ENCODE measurements at regions of chr11 and their contacts with region 1.

Region 1: DNA sequence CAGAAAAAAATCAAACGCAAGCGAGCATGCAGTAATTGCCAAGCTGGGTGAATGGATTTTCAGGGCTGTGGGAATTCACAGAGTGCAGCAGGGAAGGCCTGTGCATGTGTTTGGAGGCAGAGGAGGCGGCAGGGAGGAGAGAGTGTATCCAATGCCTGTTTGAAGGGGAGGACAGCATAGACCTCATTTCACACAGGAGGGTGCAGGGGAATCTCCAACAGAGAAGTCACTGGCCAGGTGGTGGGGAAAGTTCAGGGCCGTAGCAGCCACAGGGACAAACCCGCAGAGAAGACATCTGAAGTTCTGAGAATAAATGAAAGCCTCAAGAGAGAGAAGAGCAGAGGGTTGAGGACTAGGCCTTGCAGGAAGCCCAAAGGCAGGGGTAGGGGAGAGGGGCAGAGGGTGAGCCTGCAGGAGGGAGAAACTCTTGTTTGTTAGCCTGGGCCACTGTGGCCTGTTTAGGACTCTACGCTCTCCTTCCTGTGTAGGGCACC is 19.2 kb upstream of the KDM2A start:
- DNase-seq: no peak
- H3K4me3 ChIP-seq: no peak overlapping the region
- H3K27ac ChIP-seq: no peak overlapping the region
- H3K4me1 ChIP-seq: peaks cover 0 to 3% (median 1%) of the 10 kb centered on the region in 4 experiments; a peak in 2 of 7 replicates
- H3K27me3 ChIP-seq: no peaks in the 10 kb centered on the region
- CTCF ChIP-seq: no peak
- EP300 ChIP-seq: no peak
- POLR2A ChIP-seq: no peak
- RAD21 ChIP-seq: no peak

Region 2: DNA sequence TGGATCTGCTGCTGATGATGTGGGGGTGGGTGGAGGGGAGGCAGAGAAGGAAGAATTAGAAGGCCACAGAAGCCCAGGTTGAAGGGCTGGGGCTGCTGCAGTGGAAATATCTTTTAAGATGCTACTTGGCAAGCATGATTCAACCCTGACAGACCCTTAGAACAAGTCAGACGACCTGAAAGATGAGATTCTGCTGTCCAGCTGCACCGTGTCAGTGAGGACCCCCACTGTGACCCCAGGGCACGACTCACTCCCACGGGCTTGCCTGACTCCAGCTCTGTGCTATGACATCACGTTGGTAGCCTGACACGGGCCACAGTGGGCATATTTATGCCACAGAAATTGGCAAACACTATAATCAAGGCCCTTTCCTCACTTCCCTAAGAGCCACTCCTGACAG is 207.0 kb before region 1 on chr11:
- CTCF ChIA-PET with region 1: no interaction called
- POLR2A ChIA-PET with region 1: no interaction called
- DNase-seq: no peak
- H3K4me3 ChIP-seq: no peak overlapping the region
- H3K27ac ChIP-seq: no peak overlapping the region
- H3K4me1 ChIP-seq: peaks cover 0 to 9% (median 4%) of the 10 kb centered on the region in 4 experiments; a peak in 5 of 7 replicates
- H3K27me3 ChIP-seq: no peaks in the 10 kb centered on the region
- CTCF ChIP-seq: no peak
- EP300 ChIP-seq: no peak
- POLR2A ChIP-seq: no peak
- RAD21 ChIP-seq: no peak

Region 3: DNA sequence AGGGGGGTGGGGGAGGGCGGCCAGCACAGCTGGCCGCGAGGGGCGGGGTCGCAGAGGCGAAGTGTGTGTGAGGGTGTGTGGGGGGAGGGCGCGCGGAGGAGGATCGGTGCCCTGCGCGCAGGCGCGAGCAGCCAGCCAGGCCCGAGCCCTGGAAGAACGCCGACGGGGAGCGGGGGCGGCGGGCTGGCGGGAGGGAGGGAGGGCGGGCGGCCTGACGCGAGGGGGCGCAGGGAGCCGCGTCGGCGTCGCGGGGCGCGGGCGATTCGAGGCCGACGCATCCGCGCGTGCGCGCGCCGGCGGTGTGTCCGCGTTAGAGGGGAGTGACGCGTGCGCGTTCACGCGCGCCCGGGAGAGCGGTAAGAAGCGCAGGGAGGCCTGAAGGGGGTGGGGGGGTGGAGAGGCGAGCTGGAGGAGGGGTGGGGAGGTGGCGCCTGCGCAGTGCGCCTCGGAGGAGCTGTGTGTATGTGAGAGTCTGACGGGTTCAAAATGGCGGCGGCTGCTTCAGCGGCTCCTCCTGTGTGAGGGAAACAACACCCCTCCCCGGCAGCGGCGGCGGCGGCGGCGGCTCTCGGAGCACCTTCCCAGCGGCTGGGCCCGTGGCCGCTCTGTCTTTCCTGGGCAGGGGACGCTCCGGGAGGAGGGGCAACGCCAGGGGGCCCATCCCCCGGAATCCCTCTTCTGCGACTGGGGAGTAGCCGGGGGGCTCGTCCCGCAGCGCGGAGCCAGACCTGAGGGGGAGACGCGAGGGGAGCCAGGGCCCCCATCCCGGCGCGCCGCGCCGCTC is 19.1 kb after region 1 on chr11 and contains the start of gene KDM2A:
- CTCF ChIA-PET with region 1: interaction called, 17 read pairs
- POLR2A ChIA-PET with region 1: interaction called, 5 read pairs
- DNase-seq: peak; percentile 92 to 97
- H3K4me3 ChIP-seq: peak within 1 kb of the TSS; percentile 80 to 97 (median 92)
- H3K27ac ChIP-seq: peak within 1 kb of the TSS; percentile 94
- H3K4me1 ChIP-seq: peaks cover 0 to 5% (median 3%) of the 10 kb centered on the region in 4 experiments; a peak in 4 of 7 replicates
- H3K27me3 ChIP-seq: no peaks in the 10 kb centered on the region
- CTCF ChIP-seq: peak in 1 of 3 experiments; percentile 22; a peak in 1 of 4 replicates
- EP300 ChIP-seq: 0 out of 3 replicates have a peak, but pooled peaks of 1 of the 2 experiments have one; percentile 43
- POLR2A ChIP-seq: peak; percentile 30 to 52; a peak in 2 of 3 replicates
- RAD21 ChIP-seq: no peak; a peak in 1 of 4 replicates
- total RNA-seq, gene KDM2A: 56.6 and 66.2 TPM in 2 replicates

Region 4: GRCh38 chr11:67167086-67167485 is 67.2 kb after region 1 on chr11:
- CTCF ChIA-PET with region 1: interaction called, 12 read pairs
- POLR2A ChIA-PET with region 1: no interaction called
- DNase-seq: no peak
- H3K4me3 ChIP-seq: no peak overlapping the region
- H3K27ac ChIP-seq: no peak overlapping the region
- H3K4me1 ChIP-seq: no peaks in the 10 kb centered on the region
- H3K27me3 ChIP-seq: no peaks in the 10 kb centered on the region
- CTCF ChIP-seq: no peak
- EP300 ChIP-seq: no peak
- POLR2A ChIP-seq: no peak
- RAD21 ChIP-seq: no peak